A549 (cell line): ENCODE measurements at regions of chr7 and their contacts with region 1.

Region 1: DNA sequence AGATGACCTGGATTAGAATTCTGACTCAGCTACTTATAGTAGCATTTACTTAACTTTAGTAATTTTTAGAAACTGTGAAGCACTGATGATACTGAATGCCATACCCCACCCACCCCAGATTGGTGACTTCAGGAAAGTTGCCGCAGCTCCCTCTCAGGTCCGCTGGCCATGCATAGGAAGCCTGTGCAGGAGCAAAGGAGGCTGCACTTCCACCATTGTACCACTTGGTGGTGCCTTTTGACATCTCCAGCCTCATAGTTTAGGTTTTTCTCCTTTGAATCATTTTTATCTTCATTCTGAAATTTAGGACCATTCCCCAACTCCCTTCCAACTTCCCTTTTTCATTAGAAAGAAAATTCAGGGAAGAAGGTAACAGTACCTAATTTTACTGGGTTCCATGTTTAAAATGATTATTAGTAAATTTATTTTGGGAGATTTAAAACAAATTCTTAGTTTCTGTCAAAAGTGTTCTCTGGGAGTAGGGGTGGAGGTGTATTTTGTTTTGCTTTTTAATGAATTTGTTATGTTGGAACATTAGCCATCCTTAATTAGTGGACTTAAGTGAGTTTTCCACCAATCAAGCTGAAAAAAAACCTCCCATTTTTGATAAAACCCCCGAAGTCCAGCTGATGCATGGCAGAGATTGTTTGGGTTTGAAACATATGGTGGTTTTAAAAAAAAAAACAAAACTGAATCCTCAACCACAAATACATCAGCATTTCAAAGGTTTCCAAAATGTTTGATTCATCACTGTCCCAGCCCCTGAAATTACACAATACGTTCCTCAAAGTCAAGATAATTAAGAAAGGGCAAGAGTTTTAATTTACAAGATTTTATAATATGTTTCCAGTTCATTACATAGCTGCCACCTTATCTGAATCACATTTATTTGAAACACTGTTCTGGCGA is 109.6 kb downstream of the WNT2 start:
- DNase-seq: peak; percentile 38 to 68
- ATAC-seq: peak; percentile 82 to 93
- H3K4me3 ChIP-seq: no peak overlapping the region
- H3K27ac ChIP-seq: no peak overlapping the region
- H3K4me1 ChIP-seq: no peaks in the 10 kb centered on the region
- CTCF ChIP-seq: peak; percentile 75
- EP300 ChIP-seq: no peak
- POLR2A ChIP-seq: no peak
- RAD21 ChIP-seq: peak; percentile 74 to 81

Region 2: DNA sequence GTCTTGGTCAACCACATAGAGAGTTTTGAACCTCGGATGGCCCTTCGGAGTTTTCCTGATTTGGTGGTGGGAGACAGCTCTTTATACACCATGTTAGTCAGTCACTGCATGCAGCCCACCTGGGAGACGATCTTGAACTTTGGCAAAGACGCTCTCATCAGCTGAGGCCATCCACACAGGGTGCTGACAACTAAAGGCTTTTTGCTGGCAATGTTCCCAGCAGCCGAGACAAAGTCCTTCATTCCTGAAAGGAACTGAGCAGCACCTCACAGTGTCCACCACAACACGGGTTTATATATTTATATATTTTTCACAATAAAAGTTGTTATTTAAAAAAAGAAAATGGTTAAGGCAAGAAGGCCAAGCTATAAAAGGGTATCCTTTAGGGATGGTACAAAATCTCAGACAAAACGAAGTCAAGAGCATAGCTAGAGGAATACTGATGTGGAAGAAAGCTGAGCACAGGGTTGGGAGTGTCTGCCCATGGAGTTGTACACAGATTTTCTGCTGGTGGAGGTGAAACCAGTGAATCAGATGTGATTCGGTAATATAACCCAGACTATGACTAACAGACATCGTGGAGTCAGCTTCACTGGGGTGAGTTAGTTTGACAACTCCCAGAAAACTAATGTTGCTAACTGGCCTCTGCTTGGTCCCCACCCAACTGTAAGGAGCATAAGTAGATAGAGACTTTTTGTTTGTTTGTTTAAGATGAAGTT is 378.2 kb before region 1 on chr7:
- CTCF ChIA-PET with region 1: no interaction called
- POLR2A ChIA-PET with region 1: no interaction called
- DNase-seq: peak; percentile 22 to 42
- ATAC-seq: peak; percentile 68 to 85; a peak in 5 of 6 replicates
- H3K4me3 ChIP-seq: no peak overlapping the region
- H3K27ac ChIP-seq: peak overlapping the region; percentile 9 to 21; a peak in 2 of 6 replicates
- H3K4me1 ChIP-seq: peaks cover 27% of the 10 kb centered on the region
- CTCF ChIP-seq: no peak
- EP300 ChIP-seq: no peak
- POLR2A ChIP-seq: no peak
- RAD21 ChIP-seq: no peak

Region 3: DNA sequence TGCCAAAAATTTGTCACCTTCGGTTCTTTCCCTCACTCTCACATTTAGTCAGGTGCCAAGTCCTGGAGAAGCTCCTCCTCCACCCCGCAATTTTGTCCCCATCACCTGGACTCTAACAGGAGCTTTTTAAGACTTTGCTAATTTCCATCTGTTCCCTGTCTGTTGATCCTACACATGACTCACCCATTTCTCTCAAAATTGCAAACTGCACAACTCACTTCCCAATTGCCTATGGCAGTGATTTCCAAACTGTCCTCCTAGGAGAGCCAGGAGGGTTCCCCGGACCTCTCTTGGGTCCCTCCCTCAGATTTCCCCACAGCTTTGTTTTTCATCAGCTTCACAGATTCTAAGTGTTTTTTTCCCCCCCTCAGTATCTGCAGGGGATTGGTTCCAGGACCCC is 10.7 kb before region 1 on chr7:
- CTCF ChIA-PET with region 1: interaction called, 21 read pairs
- POLR2A ChIA-PET with region 1: no interaction called
- DNase-seq: no peak
- ATAC-seq: no peak
- H3K4me3 ChIP-seq: no peak overlapping the region
- H3K27ac ChIP-seq: no peak overlapping the region
- H3K4me1 ChIP-seq: no peaks in the 10 kb centered on the region
- CTCF ChIP-seq: no peak
- EP300 ChIP-seq: no peak
- POLR2A ChIP-seq: no peak
- RAD21 ChIP-seq: no peak

Region 4: DNA sequence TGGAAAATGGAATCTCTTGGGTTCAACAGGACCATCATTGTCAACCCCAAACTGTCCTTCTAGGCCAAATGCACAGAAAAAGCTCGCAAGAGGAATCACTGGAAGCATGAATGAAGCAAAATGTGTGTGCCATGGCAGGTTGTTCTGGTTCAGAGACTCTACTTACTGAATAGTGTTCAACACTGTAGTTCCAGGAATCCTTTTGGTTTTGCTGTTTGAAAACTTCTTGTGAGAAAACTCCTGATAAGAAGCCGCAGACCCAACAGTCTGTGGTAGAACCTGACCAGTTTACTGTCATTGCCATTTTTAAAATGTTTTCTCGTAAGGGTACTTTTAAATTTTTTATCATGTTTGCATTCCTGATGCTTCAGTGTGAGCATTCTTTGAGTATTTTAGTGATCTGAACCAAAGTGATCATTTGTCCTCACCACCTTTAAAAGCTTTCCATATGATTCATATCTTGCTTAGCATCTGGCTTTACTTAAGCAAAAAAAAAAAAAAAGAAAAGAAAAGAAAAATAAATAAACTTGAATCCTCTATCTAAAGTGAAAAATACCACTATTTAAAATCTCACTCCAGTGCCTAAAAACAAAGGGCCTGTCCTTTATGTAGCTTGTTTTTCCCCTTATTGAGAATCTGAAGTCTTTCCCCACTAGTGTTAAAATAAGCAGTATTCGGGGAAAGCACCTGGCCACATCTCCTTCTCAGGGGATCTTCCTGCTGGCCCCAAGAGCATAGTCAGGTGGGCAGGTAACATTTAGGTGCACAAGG is 17.2 kb after region 1 on chr7:
- CTCF ChIA-PET with region 1: interaction called, 16 read pairs
- POLR2A ChIA-PET with region 1: no interaction called
- DNase-seq: no peak
- ATAC-seq: no peak
- H3K4me3 ChIP-seq: no peak overlapping the region
- H3K27ac ChIP-seq: no peak overlapping the region
- H3K4me1 ChIP-seq: no peaks in the 10 kb centered on the region
- CTCF ChIP-seq: no peak
- EP300 ChIP-seq: no peak
- POLR2A ChIP-seq: no peak
- RAD21 ChIP-seq: no peak

Region 5: GRCh38 chr7:117384688-117385087 is 171.5 kb after region 1 on chr7:
- CTCF ChIA-PET with region 1: interaction called, 12 read pairs
- POLR2A ChIA-PET with region 1: no interaction called
- DNase-seq: peak in 1 of 2 experiments; percentile 16
- ATAC-seq: no peak
- H3K4me3 ChIP-seq: no peak overlapping the region
- H3K27ac ChIP-seq: no peak overlapping the region
- H3K4me1 ChIP-seq: peaks cover 16% of the 10 kb centered on the region
- CTCF ChIP-seq: no peak
- EP300 ChIP-seq: no peak
- POLR2A ChIP-seq: no peak
- RAD21 ChIP-seq: no peak